ENCODE measurements at regions of chr21 and their contacts with region 1.

Region 1: GRCh38 chr21:17903029-17903806 is 84.1 kb upstream of the C21orf91 start:
- DNase-seq: peak in 4 of 5 donors; percentile 52 to 57 (median 56)
- H3K4me3 ChIP-seq: no peak overlapping the region
- H3K4me3 Mint-ChIP-seq: no peak overlapping the region
- H3K27ac ChIP-seq: no peak overlapping the region
- H3K27ac Mint-ChIP-seq: no peak overlapping the region
- H3K4me1 ChIP-seq: peaks cover 5% of the 10 kb centered on the region
- H3K4me1 Mint-ChIP-seq: peaks cover 5 to 7% (median 6%) of the 10 kb centered on the region in 4 donors
- H3K27me3 ChIP-seq: no peaks in the 10 kb centered on the region
- H3K27me3 Mint-ChIP-seq: no peaks in the 10 kb centered on the region

Region 2: GRCh38 chr21:17387030-17387617 is 516.1 kb before region 1 on chr21:
- CTCF ChIA-PET with region 1: no interaction called
- POLR2A ChIA-PET with region 1: no interaction called
- intact Hi-C with region 1: loop called (anchors 1 kb)
- DNase-seq: peak in 4 of 5 donors; percentile 48 to 63 (median 60)
- H3K4me3 ChIP-seq: no peak overlapping the region
- H3K4me3 Mint-ChIP-seq: no peak overlapping the region
- H3K27ac ChIP-seq: no peak overlapping the region
- H3K27ac Mint-ChIP-seq: no peak overlapping the region
- H3K4me1 ChIP-seq: no peaks in the 10 kb centered on the region
- H3K4me1 Mint-ChIP-seq: no peaks in the 10 kb centered on the region
- H3K27me3 ChIP-seq: no peaks in the 10 kb centered on the region
- H3K27me3 Mint-ChIP-seq: peaks cover 2 to 5% of the 10 kb centered on the region in 2 donors

Region 3: GRCh38 chr21:17611414-17612022 is 291.7 kb before region 1 on chr21:
- CTCF ChIA-PET with region 1: no interaction called
- POLR2A ChIA-PET with region 1: no interaction called
- intact Hi-C with region 1: loop called (anchors 5 kb)
- DNase-seq: peak; percentile 80 to 91 (median 84)
- H3K4me3 ChIP-seq: peak overlapping the region; percentile 87 to 97
- H3K4me3 Mint-ChIP-seq: peak overlapping the region; percentile 91 to 99 (median 95)
- H3K27ac ChIP-seq: peak overlapping the region; percentile 84
- H3K27ac Mint-ChIP-seq: peak overlapping the region; percentile 95 to 100 (median 99)
- H3K4me1 ChIP-seq: peaks cover 27% of the 10 kb centered on the region
- H3K4me1 Mint-ChIP-seq: peaks cover 17 to 50% (median 25%) of the 10 kb centered on the region in 4 donors
- H3K27me3 ChIP-seq: no peaks in the 10 kb centered on the region
- H3K27me3 Mint-ChIP-seq: no peaks in the 10 kb centered on the region

Region 4: DNA sequence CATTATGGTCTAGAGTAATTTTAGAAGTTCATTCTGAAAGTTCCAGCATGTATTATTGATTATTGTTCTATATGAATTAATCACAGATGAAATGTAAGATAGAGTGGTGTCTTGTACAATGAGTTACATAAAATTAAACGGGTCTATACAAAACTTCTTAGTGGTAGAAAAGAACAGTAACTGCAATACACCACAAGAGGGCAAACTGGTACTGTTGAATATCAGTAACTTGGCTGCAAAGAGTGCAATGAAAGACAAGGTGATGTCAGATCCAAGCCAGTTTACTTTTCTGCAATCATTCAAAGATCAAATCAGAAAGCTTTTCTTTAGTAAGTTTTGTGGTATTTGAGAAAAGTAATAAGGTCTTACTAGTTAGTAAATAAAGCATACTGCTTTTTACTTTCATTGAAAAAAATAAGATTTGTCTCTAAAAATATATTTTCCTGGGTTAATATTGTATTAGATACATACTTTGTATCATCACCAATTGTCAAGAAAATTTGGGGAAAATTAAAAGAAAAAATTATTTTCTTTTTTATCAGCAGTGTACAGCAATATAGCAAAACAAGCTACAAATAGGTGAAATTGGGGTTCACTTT is 224.1 kb before region 1 on chr21:
- CTCF ChIA-PET with region 1: interaction called, 95 read pairs
- POLR2A ChIA-PET with region 1: no interaction called
- intact Hi-C with region 1: loop called (anchors 1 kb)
- DNase-seq: peak; percentile 40 to 70 (median 66)
- H3K4me3 ChIP-seq: no peak overlapping the region
- H3K4me3 Mint-ChIP-seq: no peak overlapping the region
- H3K27ac ChIP-seq: no peak overlapping the region
- H3K27ac Mint-ChIP-seq: no peak overlapping the region
- H3K4me1 ChIP-seq: no peaks in the 10 kb centered on the region
- H3K4me1 Mint-ChIP-seq: no peaks in the 10 kb centered on the region
- H3K27me3 ChIP-seq: no peaks in the 10 kb centered on the region
- H3K27me3 Mint-ChIP-seq: no peaks in the 10 kb centered on the region

Region 5: DNA sequence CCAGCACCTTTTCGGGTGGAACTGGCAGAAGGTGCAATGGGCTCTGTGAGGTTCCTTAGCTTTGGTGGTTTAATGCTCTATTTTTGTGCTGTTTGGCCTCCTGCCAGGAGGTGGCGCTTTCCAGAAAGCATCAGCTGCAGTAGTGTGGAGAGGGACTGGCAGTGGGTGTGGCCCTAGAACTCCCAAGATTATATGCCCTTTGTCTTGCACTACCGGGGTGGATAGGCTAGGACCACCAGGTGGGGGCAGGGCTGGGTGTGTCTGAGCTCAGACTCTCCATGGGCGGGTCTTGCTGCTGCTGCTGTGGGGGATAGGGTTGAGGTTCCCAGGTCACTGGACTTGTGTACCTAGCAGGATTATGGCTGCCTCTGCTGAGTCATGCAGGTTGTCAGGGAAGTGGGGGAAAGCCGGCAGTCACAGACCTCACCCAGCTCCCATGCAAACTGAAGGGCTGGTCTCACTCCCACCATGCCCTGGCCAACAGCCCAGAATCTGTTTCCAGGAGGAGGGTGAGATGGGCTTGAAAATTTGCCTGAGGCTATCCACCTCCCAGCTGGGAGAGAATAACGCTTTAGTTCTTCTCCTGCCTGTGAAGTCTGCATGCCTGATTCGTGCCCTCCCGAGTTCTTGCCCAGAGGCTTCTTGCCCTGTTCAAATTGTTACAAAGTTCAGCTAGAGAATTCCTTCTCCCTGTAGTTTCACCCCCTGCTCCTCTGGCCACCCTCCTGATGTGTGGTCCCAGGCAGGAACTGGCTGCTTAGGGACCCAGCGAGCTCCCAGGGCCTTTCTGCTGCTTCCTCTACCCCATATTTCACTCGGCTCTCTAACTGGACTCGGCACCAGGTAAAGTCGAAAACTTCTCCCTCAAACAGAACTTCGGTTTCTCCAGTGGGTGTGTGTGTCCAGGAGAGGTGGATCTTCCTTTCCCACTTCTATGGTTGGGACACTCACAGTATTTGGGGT is 214.0 kb before region 1 on chr21:
- CTCF ChIA-PET with region 1: interaction called, 16 read pairs
- POLR2A ChIA-PET with region 1: no interaction called
- intact Hi-C with region 1: loop called (anchors 1 kb)
- DNase-seq: peak; percentile 35 to 59 (median 43)
- H3K4me3 ChIP-seq: no peak overlapping the region
- H3K4me3 Mint-ChIP-seq: peak overlapping the region in 4 of 8 donors; percentile 9 to 35 (median 20)
- H3K27ac ChIP-seq: no peak overlapping the region
- H3K27ac Mint-ChIP-seq: peak overlapping the region in 4 of 7 donors; percentile 18 to 66 (median 52)
- H3K4me1 ChIP-seq: peaks cover 27% of the 10 kb centered on the region
- H3K4me1 Mint-ChIP-seq: peaks cover 29 to 51% (median 39%) of the 10 kb centered on the region in 4 donors
- H3K27me3 ChIP-seq: no peaks in the 10 kb centered on the region
- H3K27me3 Mint-ChIP-seq: no peaks in the 10 kb centered on the region

Region 6: DNA sequence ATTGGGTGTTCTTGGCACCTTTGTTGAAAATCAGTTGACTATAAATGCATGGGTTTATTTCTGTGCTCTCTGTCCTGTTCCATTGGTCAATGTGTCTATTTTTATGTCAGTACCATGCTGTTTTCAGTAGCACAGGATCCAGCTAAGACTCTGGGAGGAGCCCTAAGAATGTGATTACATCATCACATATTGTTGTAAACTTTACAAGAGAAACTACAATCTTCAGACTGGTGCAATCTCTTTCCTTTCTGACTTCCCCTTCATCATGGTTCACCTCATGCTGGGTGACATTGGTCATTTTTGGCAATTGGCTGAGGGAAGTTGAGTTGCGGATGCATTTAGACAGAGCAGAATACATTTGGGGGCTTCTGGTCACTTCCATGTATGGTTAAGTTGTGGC is 172.4 kb before region 1 on chr21:
- CTCF ChIA-PET with region 1: interaction called, 8 read pairs
- POLR2A ChIA-PET with region 1: no interaction called
- intact Hi-C with region 1: loop called (anchors 2 kb)
- DNase-seq: no peak
- H3K4me3 ChIP-seq: no peak overlapping the region
- H3K4me3 Mint-ChIP-seq: no peak overlapping the region
- H3K27ac ChIP-seq: no peak overlapping the region
- H3K27ac Mint-ChIP-seq: peak overlapping the region in 1 of 7 donors; percentile 67
- H3K4me1 ChIP-seq: no peaks in the 10 kb centered on the region
- H3K4me1 Mint-ChIP-seq: peaks cover 7 to 8% (median 7%) of the 10 kb centered on the region in 4 donors
- H3K27me3 ChIP-seq: no peaks in the 10 kb centered on the region
- H3K27me3 Mint-ChIP-seq: no peaks in the 10 kb centered on the region

Measured in CD4-positive, alpha-beta memory T cell (primary cell).